CD4-positive, alpha-beta T cell (primary cell): ENCODE measurements at regions of chr5 and their contacts with region 1.

Region 1: DNA sequence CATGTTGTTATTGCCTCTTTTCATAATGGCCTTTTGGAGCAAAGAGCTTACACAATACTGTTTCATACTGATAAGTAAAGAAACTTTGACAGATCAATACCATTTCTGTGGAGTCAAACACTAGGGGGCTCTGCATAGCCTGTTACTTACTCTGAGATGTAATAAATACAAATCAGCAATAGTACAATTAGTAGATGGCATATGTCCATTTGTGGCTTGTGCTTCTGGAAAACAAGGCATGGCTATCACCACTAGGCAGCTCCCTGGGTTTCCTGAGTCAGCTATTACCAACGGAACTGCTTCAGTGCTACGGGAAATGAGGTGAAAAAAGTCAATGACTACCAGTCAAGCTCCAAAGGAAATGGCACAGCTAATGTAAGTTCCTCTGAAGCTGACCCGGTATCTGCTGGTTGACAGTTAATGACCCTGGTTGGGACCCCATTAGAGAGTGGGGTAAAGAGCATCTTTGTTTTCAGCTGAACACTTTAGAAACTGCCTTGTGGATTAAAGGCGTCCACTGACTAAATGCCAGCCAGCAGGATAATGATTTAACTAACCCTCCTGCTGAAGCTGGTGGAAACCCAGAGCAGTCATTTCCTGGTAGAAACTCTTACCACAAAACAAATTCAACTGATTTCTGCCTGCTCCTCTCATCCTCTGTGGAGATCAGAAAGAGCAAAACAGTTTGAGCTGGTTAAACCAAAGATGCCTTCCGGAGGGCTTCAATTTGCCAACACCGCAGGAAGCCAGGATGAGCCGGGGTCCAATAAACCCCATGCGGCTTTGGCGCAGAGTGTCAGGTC is 69.0 kb upstream of the FAM169A start:
- DNase-seq: peak in 8 of 14 experiments; percentile 1 to 50 (median 22)
- ATAC-seq: peak; percentile 65
- H3K4me3 ChIP-seq: peak overlapping the region; percentile 33
- H3K4me3 Mint-ChIP-seq: peak overlapping the region; percentile 72
- H3K27ac ChIP-seq: peak overlapping the region in 1 of 2 donors; percentile 23
- H3K27ac Mint-ChIP-seq: peak overlapping the region; percentile 65
- H3K4me1 ChIP-seq: peaks cover 16% of the 10 kb centered on the region
- H3K4me1 Mint-ChIP-seq: peaks cover 30% of the 10 kb centered on the region
- H3K27me3 ChIP-seq: no peaks in the 10 kb centered on the region
- H3K27me3 Mint-ChIP-seq: no peaks in the 10 kb centered on the region
- CTCF ChIP-seq: peak; percentile 52

Region 2: GRCh38 chr5:74810915-74811314 is 124.2 kb before region 1 on chr5:
- CTCF ChIA-PET with region 1: no interaction called
- POLR2A ChIA-PET with region 1: no interaction called
- intact Hi-C with region 1: no loop called
- DNase-seq: no peak
- ATAC-seq: no peak
- H3K4me3 ChIP-seq: no peak overlapping the region
- H3K4me3 Mint-ChIP-seq: no peak overlapping the region
- H3K27ac ChIP-seq: no peak overlapping the region
- H3K27ac Mint-ChIP-seq: no peak overlapping the region
- H3K4me1 ChIP-seq: no peaks in the 10 kb centered on the region
- H3K4me1 Mint-ChIP-seq: no peaks in the 10 kb centered on the region
- H3K27me3 ChIP-seq: no peaks in the 10 kb centered on the region
- H3K27me3 Mint-ChIP-seq: no peaks in the 10 kb centered on the region
- CTCF ChIP-seq: no peak

Region 3: DNA sequence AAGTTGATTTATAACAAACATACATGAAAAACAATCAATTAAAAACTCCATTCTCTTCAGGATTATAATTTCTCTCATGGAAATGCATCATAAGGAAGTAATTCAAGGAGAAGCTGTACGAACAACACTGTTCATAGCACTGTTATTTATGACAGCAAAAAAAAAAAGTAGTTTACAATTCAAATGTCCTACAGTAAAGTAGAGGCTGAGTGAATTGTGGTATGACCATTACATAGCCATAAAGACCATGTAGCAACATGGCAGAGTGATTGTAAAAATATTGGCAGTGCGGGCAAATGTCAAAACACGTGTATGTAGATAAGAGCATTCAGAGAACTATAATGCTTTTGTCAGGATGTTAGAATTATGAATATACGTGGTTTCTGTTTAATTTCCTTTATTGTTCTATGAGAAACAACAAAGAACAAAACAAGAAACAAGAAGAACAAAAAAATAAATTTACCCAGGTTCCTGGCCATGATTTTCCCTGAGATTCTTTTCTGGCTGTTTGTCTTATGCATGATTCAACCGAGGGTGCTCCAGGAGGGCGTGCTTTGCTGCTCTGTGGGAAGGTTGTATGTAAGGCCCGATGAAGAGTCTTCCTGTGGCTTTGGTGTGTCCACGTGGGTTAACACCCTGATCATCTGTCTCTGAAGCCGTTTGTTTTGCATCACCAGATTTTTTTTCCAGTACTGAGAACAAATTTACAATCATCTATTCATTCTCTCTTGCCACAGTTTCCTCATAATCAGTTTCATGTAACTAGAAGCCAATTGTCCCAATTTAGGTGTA is 88.4 kb after region 1 on chr5:
- CTCF ChIA-PET with region 1: no interaction called
- POLR2A ChIA-PET with region 1: interaction called, 4 read pairs
- intact Hi-C with region 1: loop called in 1 of 2 experiments (anchors 5 kb)
- DNase-seq: peak in 6 of 14 experiments; percentile 4 to 78 (median 34)
- ATAC-seq: peak; percentile 58
- H3K4me3 ChIP-seq: no peak overlapping the region
- H3K4me3 Mint-ChIP-seq: peak overlapping the region; percentile 21
- H3K27ac ChIP-seq: no peak overlapping the region
- H3K27ac Mint-ChIP-seq: peak overlapping the region; percentile 57
- H3K4me1 ChIP-seq: peaks cover 7% of the 10 kb centered on the region
- H3K4me1 Mint-ChIP-seq: peaks cover 39% of the 10 kb centered on the region
- H3K27me3 ChIP-seq: no peaks in the 10 kb centered on the region
- H3K27me3 Mint-ChIP-seq: no peaks in the 10 kb centered on the region
- CTCF ChIP-seq: no peak

Region 4: DNA sequence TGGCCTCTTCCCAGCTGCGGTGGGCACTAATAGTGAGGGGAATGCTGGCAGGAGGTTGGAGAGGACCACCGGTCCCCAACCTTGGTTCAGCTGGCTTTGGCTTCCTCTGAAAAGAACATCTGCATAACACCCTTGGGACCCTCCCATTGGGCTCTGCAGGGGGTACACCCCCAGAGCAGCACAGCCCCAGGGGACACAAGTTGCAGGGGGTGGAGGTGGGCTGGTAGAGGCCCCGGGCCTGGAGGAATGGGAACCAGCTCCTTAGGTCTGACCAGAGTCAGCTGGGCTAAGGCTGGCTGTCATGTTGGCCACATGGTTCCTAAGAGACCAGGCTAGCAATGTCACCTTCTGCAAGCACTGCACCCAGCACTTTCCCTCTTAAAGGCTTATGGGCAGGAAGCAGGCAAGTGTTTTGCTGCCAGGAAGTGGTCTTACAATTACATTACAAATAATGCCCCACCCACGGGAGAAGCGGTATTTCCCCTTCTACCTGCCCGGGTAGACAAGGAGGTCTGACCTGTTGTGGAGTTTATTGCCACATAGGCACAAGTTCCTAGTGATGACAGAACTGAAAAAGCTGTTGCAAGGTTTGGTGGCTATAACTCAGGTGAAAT is 99.1 kb after region 1 on chr5:
- CTCF ChIA-PET with region 1: no interaction called
- POLR2A ChIA-PET with region 1: interaction called, 3 read pairs
- intact Hi-C with region 1: loop called in 1 of 2 experiments (anchors 5 kb)
- DNase-seq: peak in 10 of 14 experiments; percentile 5 to 84 (median 46)
- ATAC-seq: peak; percentile 83
- H3K4me3 ChIP-seq: no peak overlapping the region
- H3K4me3 Mint-ChIP-seq: peak overlapping the region; percentile 46
- H3K27ac ChIP-seq: no peak overlapping the region
- H3K27ac Mint-ChIP-seq: peak overlapping the region; percentile 77
- H3K4me1 ChIP-seq: peaks cover 27% of the 10 kb centered on the region
- H3K4me1 Mint-ChIP-seq: peaks cover 86% of the 10 kb centered on the region
- H3K27me3 ChIP-seq: no peaks in the 10 kb centered on the region
- H3K27me3 Mint-ChIP-seq: no peaks in the 10 kb centered on the region
- CTCF ChIP-seq: no peak

Region 5: DNA sequence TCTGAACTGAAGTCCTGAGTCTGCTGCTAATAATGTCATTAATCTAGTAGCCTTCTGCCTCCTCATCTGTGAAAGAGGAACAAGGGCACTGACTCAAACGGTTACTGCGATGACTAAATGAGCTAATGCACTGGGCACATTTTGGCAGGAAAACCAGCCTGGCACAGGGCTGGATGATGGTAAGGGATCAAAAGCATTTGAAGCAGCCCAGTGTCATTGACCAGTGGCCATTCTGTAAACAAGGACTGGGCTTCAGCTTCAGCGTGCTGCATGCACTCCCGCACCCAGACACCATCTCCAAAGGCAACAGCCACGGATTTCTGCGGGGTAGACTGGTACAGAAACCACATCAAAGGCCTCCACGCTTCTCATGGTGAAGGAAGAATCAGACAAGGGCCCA is 109.3 kb after region 1 on chr5:
- CTCF ChIA-PET with region 1: no interaction called
- POLR2A ChIA-PET with region 1: interaction called, 6 read pairs
- intact Hi-C with region 1: loop called in 1 of 2 experiments (anchors 5 kb)
- DNase-seq: peak in 4 of 14 experiments; percentile 12 to 48 (median 37)
- ATAC-seq: no peak
- H3K4me3 ChIP-seq: no peak overlapping the region
- H3K4me3 Mint-ChIP-seq: no peak overlapping the region
- H3K27ac ChIP-seq: no peak overlapping the region
- H3K27ac Mint-ChIP-seq: no peak overlapping the region
- H3K4me1 ChIP-seq: peaks cover 16% of the 10 kb centered on the region
- H3K4me1 Mint-ChIP-seq: peaks cover 67% of the 10 kb centered on the region
- H3K27me3 ChIP-seq: no peaks in the 10 kb centered on the region
- H3K27me3 Mint-ChIP-seq: no peaks in the 10 kb centered on the region
- CTCF ChIP-seq: no peak

Region 6: DNA sequence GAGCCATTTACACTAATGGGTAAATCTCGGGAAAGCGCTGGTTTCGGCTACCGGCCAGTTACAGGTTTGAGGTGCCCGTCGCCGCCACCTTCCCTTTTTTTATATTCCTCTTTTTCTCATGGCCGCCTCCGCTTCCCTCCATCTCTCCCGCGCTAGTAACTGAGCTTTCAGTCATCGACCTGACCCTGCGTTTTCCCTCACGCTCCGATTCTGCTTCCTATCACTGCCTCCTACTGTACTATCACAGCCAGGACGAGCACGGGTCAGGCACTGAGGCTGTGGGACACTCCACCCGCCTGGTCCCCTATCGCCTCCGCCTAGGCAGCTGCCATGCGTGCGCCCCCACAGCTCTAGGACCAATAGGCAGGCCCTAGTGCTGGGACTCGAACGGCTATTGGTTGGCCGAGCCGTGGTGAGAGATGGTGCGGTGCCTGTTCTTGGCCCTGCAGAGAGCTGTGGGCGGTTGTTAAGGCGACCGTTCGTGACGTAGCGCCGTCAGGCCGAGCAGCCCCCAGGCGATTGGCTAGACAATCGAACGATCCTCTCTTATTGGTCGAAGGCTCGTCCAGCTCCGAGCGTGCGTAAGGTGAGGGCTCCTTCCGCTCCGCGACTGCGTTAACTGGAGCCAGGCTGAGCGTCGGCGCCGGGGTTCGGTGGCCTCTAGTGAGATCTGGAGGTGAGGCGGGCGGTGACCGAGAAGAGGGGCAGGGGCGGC is 401.6 kb after region 1 on chr5 and contains the start of gene HMGCR:
- CTCF ChIA-PET with region 1: no interaction called
- POLR2A ChIA-PET with region 1: no interaction called
- intact Hi-C with region 1: loop called in 1 of 2 experiments (anchors 10 kb)
- DNase-seq: peak; percentile 91 to 99 (median 95)
- ATAC-seq: peak; percentile 90
- H3K4me3 ChIP-seq: peak within 1 kb of the TSS; percentile 82
- H3K4me3 Mint-ChIP-seq: no peak within 1 kb of the TSS
- H3K27ac ChIP-seq: peak within 1 kb of the TSS; percentile 64 to 88
- H3K27ac Mint-ChIP-seq: no peak within 1 kb of the TSS
- H3K4me1 ChIP-seq: peaks cover 5% of the 10 kb centered on the region
- H3K4me1 Mint-ChIP-seq: peaks cover 38% of the 10 kb centered on the region
- H3K27me3 ChIP-seq: no peaks in the 10 kb centered on the region
- H3K27me3 Mint-ChIP-seq: no peaks in the 10 kb centered on the region
- CTCF ChIP-seq: no peak
- total RNA-seq, gene HMGCR: 55.5 to 61.5 TPM